ENCODE measurements at regions of chr4 and their contacts with region 1.

Region 1: DNA sequence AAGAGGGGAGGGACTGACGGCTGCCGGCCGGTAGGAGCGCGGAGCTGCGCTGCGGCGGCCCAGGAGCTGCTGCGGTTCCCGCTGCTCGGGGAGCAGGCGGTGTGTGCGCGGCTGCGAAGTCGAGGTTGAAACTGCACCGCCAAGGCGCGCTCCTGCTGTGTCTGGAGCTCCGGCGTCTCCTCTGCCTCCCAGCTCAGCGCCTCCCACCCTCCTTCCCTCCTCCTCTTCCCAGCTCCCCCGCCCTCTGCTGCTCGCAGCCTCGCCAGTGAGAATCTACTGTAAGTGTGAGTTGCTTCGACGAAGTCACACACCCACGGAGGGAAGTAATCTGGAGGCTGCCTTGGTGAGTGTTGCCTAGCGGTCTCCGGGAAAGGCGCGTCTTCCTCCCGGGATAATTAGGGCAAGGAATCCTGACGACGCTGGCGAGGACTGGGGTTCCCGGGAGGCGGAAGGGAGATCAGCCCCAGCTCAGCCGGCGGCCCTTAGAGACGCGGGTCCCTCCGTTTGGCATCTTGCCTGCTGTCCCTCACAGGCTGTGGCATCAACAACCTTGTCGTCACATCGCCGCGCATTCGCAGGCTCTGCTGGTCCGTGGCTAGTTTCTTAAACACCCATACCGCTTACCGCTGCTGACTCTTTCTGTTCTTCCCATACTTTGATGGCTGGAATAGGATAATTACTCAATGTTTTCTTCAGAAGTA is at the start of gene EPHA5:
- DNase-seq: peak; percentile 78
- H3K4me3 Mint-ChIP-seq: peak within 1 kb of the TSS; percentile 75
- H3K27ac Mint-ChIP-seq: no peak within 1 kb of the TSS
- H3K4me1 Mint-ChIP-seq: peaks cover 13% of the 10 kb centered on the region
- H3K27me3 Mint-ChIP-seq: no peaks in the 10 kb centered on the region
- CTCF ChIP-seq: no peak
- total RNA-seq, gene EPHA5: 0.12 and 0.28 TPM in 2 replicates

Region 2: DNA sequence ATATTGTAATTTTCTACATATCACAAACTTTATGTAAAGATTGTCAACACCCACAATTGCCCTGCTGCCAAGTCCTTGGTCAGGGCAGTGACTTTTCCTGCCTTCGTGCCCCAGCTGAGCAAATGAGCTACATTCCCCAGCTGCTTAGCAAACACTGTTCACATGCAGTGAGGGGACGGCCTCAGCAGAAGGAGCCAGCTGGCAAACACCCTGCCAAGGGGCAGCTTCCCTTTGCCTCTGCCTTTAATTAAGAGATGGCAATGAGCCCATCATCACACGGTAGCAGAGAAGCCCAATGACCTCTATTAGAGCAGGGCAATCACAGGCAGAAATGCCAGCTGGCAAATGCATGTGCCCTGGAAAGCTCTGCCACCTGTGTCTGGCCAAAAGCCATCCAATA is 253.6 kb before region 1 on chr4:
- CTCF ChIA-PET with region 1: no interaction called
- POLR2A ChIA-PET with region 1: no interaction called
- intact Hi-C with region 1: loop called (anchors 10 kb)
- DNase-seq: peak; percentile 8
- H3K4me3 Mint-ChIP-seq: no peak overlapping the region
- H3K27ac Mint-ChIP-seq: no peak overlapping the region
- H3K4me1 Mint-ChIP-seq: no peaks in the 10 kb centered on the region
- H3K27me3 Mint-ChIP-seq: no peaks in the 10 kb centered on the region
- CTCF ChIP-seq: no peak

Region 3: GRCh38 chr4:65508169-65508568 is 162.3 kb before region 1 on chr4:
- CTCF ChIA-PET with region 1: no interaction called
- POLR2A ChIA-PET with region 1: no interaction called
- intact Hi-C with region 1: loop called (anchors 2 kb)
- DNase-seq: peak; percentile 76
- H3K4me3 Mint-ChIP-seq: no peak overlapping the region
- H3K27ac Mint-ChIP-seq: peak overlapping the region; percentile 69
- H3K4me1 Mint-ChIP-seq: peaks cover 28% of the 10 kb centered on the region
- H3K27me3 Mint-ChIP-seq: no peaks in the 10 kb centered on the region
- CTCF ChIP-seq: no peak

Region 4: DNA sequence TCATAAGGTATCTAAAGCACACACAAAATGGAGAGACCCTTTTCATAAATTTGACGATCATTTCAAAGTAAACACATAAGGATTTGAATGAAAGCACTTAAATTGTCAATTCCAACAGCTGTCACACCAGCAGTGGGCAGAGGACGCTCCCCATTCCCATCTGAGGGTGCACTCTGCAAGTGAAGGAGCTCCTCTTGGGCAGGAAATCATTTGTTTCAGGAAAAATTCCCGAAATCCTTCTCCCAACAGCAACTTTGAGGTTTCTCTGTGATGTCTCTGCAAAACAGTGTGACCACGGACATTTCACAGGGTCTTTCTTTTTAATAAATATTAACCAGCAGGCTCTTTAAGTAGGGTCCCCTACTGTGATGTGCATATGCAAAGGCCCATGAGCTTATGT is 111.2 kb before region 1 on chr4:
- CTCF ChIA-PET with region 1: no interaction called
- POLR2A ChIA-PET with region 1: no interaction called
- intact Hi-C with region 1: no loop called
- DNase-seq: no peak
- H3K4me3 Mint-ChIP-seq: no peak overlapping the region
- H3K27ac Mint-ChIP-seq: no peak overlapping the region
- H3K4me1 Mint-ChIP-seq: no peaks in the 10 kb centered on the region
- H3K27me3 Mint-ChIP-seq: no peaks in the 10 kb centered on the region
- CTCF ChIP-seq: no peak

Measured in MCF 10A (cell line).